ENCODE measurements at regions of chr14 and their contacts with region 1.

Region 1: GRCh38 chr14:61894452-61895077 is 132.3 kb downstream of the SNAPC1 start:
- DNase-seq: peak; percentile 73
- ATAC-seq: no peak
- H3K4me3 Mint-ChIP-seq: no peak overlapping the region
- H3K27ac Mint-ChIP-seq: no peak overlapping the region
- H3K4me1 Mint-ChIP-seq: peaks cover 10% of the 10 kb centered on the region
- H3K27me3 Mint-ChIP-seq: peaks cover 27% of the 10 kb centered on the region

Region 2: DNA sequence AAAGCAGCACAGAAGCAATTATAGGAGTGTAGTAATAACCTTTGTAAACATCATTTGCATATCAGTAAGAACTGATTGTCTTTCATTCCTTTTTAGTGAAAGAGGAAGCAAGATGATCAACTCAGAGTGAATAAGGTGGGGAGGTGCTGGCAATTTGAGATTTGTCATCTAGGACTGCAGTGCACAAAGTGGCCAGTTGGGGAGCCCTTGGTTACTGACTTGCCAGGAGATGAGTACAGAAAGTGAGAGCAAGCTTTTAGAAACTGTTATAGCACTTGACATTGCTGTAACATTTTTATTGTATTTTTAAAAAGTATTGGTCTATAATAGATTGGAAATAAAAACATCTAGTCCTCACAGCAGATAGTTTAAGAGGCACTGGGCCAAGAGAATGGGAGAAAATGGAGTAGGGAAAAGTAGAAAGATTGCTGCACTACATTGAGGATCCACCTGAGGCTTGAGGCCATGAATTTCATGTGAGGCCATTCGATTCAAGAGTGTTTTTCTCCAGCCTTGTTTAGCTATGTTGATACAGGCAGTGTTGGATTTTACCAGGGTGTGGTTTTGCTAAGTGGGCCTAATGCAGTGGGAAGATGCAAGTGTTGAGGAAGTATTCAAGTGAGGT is 34.2 kb before region 1 on chr14:
- CTCF ChIA-PET with region 1: interaction called, 13 read pairs
- DNase-seq: peak; percentile 76
- ATAC-seq: peak; percentile 90
- H3K4me3 Mint-ChIP-seq: no peak overlapping the region
- H3K27ac Mint-ChIP-seq: no peak overlapping the region
- H3K4me1 Mint-ChIP-seq: no peaks in the 10 kb centered on the region
- H3K27me3 Mint-ChIP-seq: peaks cover 27% of the 10 kb centered on the region

Region 3: GRCh38 chr14:62126879-62127478 is 232.4 kb after region 1 on chr14:
- CTCF ChIA-PET with region 1: interaction called, 13 read pairs
- DNase-seq: no peak
- ATAC-seq: no peak
- H3K4me3 Mint-ChIP-seq: no peak overlapping the region
- H3K27ac Mint-ChIP-seq: no peak overlapping the region
- H3K4me1 Mint-ChIP-seq: no peaks in the 10 kb centered on the region
- H3K27me3 Mint-ChIP-seq: peaks cover 71% of the 10 kb centered on the region